ENCODE measurements at regions of chr3 and their contacts with region 1.

Region 1: GRCh38 chr3:182637350-182638110 is 155.8 kb upstream of the ATP11B start:
- DNase-seq: no peak
- ATAC-seq: no peak
- H3K4me3 Mint-ChIP-seq: no peak overlapping the region
- H3K27ac Mint-ChIP-seq: no peak overlapping the region
- H3K4me1 Mint-ChIP-seq: no peaks in the 10 kb centered on the region
- H3K27me3 Mint-ChIP-seq: peaks cover 11% of the 10 kb centered on the region

Region 2: DNA sequence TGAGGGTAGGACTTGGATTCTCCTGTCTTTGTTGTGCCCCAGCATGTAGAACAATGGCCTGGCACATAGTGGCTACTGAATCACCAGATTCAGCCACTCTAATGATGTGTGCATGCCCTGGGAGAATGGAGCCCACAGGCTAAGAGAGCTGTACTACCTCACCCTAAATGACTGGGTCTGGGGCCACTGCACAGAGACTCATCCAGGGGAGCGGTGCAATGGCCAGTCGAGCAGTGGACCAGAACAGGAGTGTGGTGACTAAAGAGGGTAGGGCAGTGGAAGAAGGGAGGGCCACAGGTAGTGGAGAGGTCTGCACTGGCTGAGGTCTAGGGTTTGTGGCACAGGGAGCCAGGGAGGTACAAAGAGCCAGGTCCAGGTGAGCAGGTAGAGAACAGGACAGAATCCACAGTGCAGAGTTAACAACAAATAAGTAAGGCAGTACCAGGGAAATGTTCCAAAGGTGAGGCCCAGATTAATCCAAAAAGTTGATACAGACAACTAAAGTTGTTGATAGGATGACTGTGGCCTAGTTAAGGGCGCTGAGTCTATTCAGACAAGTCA is 13.1 kb after region 1 on chr3:
- CTCF ChIA-PET with region 1: no interaction called
- POLR2A ChIA-PET with region 1: no interaction called
- intact Hi-C with region 1: loop called in 1 of 2 experiments (anchors 1 kb)
- DNase-seq: no peak
- ATAC-seq: no peak
- H3K4me3 Mint-ChIP-seq: no peak overlapping the region
- H3K27ac Mint-ChIP-seq: no peak overlapping the region
- H3K4me1 Mint-ChIP-seq: no peaks in the 10 kb centered on the region
- H3K27me3 Mint-ChIP-seq: peaks cover 18% of the 10 kb centered on the region

Measured in activated CD4-positive, alpha-beta T cell treated with anti-CD3 and anti-CD28 coated beads for 36 hours (primary cell).